GM10248 (cell line): ENCODE measurements at regions of chr1 and their contacts with region 1.

Region 1: GRCh38 chr1:156262461-156263287 is 14.8 kb upstream of the PAQR6 start:
- DNase-seq: no peak
- CTCF ChIP-seq: no peak

Region 2: DNA sequence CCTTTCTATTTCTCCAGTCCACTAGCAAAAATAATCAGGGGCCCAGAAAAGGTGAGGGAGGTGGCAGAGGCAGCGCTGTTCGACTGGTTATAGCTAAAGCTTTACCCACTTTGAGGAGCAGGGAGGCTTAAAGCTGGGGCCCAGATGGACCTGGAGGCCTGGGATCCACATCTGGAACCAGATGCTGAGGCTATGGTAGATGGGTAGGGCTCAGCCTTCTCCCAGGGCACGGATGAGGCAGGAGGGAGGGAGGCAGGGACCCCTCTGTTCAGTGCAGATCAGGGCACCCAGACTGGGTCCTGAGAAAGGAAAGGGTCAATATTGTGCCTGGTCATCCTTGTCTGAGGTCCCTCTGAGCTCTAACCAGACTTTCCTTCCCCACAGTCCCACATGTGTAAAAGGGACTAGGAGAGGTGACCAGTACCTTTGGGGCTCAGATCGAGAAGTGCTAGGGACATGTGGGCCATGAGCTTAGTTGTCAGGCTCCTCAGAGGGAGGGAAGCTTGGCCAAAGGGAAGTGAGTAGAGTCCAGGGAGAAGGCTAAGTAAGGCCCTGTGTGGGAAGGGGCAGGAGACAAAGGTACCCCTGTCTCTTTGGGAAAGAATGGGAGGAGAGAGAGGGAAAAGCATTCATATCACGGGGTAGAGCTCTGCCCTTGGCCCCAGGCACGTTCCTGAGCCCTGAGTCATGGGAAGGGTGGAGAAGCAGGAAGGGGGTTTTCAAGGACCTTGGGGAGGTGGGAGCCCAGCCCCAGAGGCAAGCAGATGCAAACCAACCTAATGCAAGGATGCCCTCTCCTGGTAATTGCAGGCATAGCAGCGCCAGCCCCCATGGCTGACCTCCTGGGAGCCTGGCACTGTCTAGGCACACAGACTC is 132.7 kb before region 1 on chr1:
- CTCF ChIA-PET with region 1: no interaction called
- POLR2A ChIA-PET with region 1: no interaction called
- DNase-seq: peak; percentile 77
- CTCF ChIP-seq: peak; percentile 96

Region 3: GRCh38 chr1:156146020-156146768 is 116.5 kb before region 1 on chr1:
- CTCF ChIA-PET with region 1: interaction called, 10 read pairs
- POLR2A ChIA-PET with region 1: no interaction called
- DNase-seq: peak; percentile 81
- CTCF ChIP-seq: peak; percentile 69

Region 4: DNA sequence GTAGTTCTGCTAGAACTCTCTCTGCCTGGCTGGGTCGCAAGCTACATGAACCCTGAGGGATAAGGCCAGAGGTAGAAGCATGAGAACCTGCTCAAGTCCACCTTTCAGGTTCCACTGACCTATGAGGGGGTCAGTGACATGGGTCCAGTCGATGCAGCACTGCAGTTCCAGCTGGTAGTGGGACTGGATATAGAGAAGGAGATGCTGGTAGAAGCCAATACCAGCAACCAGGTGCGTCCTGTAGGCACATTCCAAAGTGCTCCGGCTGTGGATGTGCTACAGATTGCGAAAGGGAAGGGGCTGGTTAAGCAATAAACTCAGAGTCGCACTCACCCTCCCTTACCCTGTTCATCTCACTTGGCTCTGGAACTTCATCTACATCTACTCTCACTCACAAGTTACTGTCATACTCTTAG is 14.3 kb after region 1 on chr1:
- CTCF ChIA-PET with region 1: interaction called, 24 read pairs
- POLR2A ChIA-PET with region 1: interaction called, 3 read pairs
- DNase-seq: no peak
- CTCF ChIP-seq: no peak

Region 5: DNA sequence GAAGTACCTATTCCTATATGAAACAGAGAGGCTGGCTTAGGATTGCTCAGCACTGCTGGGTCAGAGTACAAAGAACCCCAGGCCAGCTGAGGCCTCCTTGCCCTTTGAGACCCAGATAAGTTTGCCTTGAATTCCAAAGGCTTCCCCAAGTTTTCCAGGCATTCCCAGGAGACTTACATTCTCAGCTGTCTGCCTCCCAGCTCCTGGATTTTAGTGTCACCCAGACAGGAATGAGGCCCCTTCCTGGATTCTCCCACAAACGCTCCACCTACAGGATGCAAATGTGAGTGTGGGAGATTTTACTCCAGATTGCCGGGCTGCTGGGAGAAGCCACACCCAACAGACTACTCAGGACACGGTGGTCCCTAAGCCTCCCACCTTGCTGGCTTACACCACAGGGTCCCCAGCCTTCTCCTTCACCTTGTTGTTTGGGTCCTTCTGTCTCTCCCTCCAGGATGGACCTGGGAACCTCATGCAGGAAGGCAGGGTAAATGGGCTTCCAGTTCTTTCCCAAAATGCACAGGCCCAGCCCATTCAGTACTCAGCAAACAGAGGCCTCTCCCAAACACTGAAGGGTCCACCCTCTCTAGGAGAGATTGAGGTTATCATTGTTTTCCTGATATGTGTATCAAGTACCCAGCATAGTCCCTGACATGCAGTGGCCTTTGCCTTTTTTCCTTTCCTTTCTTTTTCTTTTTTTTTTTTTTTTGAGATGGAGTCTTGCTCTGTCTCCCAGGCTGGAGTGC is 116.9 kb after region 1 on chr1:
- CTCF ChIA-PET with region 1: no interaction called
- POLR2A ChIA-PET with region 1: no interaction called
- DNase-seq: no peak
- CTCF ChIP-seq: no peak